Posterior vena cava (tissue), 2 donors: ENCODE measurements at regions of chr1 and their contacts with region 1.

Region 1: DNA sequence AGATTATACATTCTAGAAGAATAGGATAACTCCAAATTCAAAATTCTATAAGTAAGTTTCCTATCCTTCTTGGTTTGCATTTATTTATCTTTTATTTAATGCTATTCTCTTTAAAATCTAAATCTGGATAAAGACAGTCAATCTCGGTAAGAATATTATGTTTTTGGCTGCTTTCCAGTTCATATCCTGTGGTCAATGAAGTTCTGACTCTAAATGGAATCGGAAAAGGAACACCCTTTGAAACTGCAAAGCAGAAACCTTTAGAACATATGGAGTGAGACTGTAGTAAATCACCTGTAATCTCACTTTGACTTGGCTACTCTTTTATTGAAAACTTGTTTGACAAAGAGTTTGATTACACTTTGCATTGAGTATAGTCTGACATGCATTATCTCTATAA is 85.2 kb downstream of the KIFAP3 start:
- DNase-seq: no peak

Region 2: GRCh38 chr1:170032531-170033280 is 43.5 kb after region 1 on chr1:
- intact Hi-C with region 1: loop called in 1 of 2 experiments (anchors 2 kb)
- DNase-seq: no peak

Region 3: DNA sequence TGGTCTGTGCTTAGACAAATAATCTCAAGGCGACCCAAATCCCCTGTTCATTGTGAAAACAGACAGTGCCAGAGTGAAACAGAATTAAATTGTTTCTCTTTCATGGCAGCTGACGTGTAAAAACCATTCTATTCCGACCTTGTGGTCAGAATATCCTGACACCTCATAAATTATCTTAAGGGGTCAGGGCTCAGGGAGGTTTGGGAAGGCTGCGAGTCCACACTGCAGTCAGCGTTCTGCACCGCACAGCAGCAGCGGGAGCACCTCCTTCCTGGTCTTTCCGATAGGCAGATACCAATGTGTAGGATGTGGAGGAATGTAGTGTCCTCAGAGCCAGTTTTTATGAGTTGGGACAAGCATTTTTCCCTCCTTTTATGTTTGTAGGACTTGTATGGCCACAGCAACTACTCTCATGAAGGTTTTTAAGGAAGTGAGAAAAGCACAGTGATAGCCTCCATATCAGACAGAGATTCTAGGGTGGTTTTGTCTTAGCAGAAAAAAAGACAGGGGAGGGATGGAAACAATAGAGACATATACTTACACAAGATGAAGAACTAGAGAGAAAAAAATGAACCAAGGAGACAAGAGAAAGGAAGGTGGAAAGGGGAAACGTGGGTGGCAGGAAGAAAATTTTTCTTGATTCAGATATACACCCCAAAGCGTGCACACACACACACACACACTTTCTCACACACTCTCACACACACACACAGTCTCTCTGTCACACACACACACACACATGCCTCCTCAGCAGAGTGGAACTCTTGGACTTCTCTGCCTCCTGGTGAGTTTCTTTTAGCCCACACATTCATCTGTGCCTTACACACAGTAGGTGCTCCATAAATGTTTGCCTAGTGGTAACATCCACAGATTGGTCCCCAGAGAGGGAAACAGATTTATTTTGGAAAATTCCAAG is 225.1 kb after region 1 on chr1:
- intact Hi-C with region 1: no loop called
- DNase-seq: no peak